H1 (cell line): ENCODE measurements at regions of chr11 and their contacts with region 1.

Region 1: GRCh38 chr11:74592441-74593362 is at the start of gene POLD3:
- DNase-seq: peak; percentile 70 to 97
- H3K4me3 ChIP-seq: peak within 1 kb of the TSS; percentile 93 to 99 (median 97)
- H3K27ac ChIP-seq: peak within 1 kb of the TSS; percentile 89
- H3K4me1 ChIP-seq: no peaks in the 10 kb centered on the region; a peak in 1 of 7 replicates
- H3K27me3 ChIP-seq: no peaks in the 10 kb centered on the region
- CTCF ChIP-seq: no peak
- EP300 ChIP-seq: no peak
- POLR2A ChIP-seq: peak; percentile 63 to 79
- RAD21 ChIP-seq: no peak
- total RNA-seq, gene POLD3: 29.3 and 30.5 TPM in 2 replicates

Region 2: GRCh38 chr11:74468936-74469335 is 123.8 kb before region 1 on chr11:
- CTCF ChIA-PET with region 1: no interaction called
- POLR2A ChIA-PET with region 1: no interaction called
- DNase-seq: no peak
- H3K4me3 ChIP-seq: no peak overlapping the region
- H3K27ac ChIP-seq: no peak overlapping the region
- H3K4me1 ChIP-seq: peaks cover 4 to 11% (median 10%) of the 10 kb centered on the region in 4 experiments
- H3K27me3 ChIP-seq: peaks cover 0 to 5% (median 0%) of the 10 kb centered on the region in 4 experiments; a peak in 3 of 7 replicates
- CTCF ChIP-seq: no peak
- EP300 ChIP-seq: no peak
- POLR2A ChIP-seq: no peak
- RAD21 ChIP-seq: no peak

Region 3: GRCh38 chr11:74602637-74603556 is 10.2 kb after region 1 on chr11:
- CTCF ChIA-PET with region 1: interaction called, 3 read pairs
- POLR2A ChIA-PET with region 1: interaction called, 10 read pairs
- DNase-seq: no peak
- H3K4me3 ChIP-seq: no peak overlapping the region
- H3K27ac ChIP-seq: no peak overlapping the region
- H3K4me1 ChIP-seq: no peaks in the 10 kb centered on the region
- H3K27me3 ChIP-seq: no peaks in the 10 kb centered on the region
- CTCF ChIP-seq: no peak
- EP300 ChIP-seq: no peak
- POLR2A ChIP-seq: no peak
- RAD21 ChIP-seq: no peak

Region 4: GRCh38 chr11:74783241-74783871 is 190.7 kb after region 1 on chr11:
- CTCF ChIA-PET with region 1: no interaction called
- POLR2A ChIA-PET with region 1: no interaction called
- DNase-seq: no peak
- H3K4me3 ChIP-seq: no peak overlapping the region
- H3K27ac ChIP-seq: no peak overlapping the region
- H3K4me1 ChIP-seq: peaks cover 0 to 4% (median 0%) of the 10 kb centered on the region in 4 experiments; a peak in 1 of 7 replicates
- H3K27me3 ChIP-seq: peaks cover 0 to 1% (median 0%) of the 10 kb centered on the region in 4 experiments; a peak in 1 of 7 replicates
- CTCF ChIP-seq: no peak
- EP300 ChIP-seq: no peak
- POLR2A ChIP-seq: no peak
- RAD21 ChIP-seq: no peak